ENCODE measurements at regions of chr16 and their contacts with region 1.

Region 1: GRCh38 chr16:54929090-54930004 is 1.3 kb upstream of the IRX5 start:
- DNase-seq: peak; percentile 99
- H3K4me3 ChIP-seq: peak overlapping the region; percentile 87
- H3K27ac ChIP-seq: peak overlapping the region; percentile 96
- H3K4me1 ChIP-seq: peaks cover 21% of the 10 kb centered on the region
- H3K27me3 ChIP-seq: no peaks in the 10 kb centered on the region

Region 2: GRCh38 chr16:53549970-53550690 is 1379.2 kb before region 1 on chr16:
- in situ Hi-C with region 1: loop called (anchors 10 kb)
- DNase-seq: peak; percentile 93
- H3K4me3 ChIP-seq: peak overlapping the region; percentile 42
- H3K27ac ChIP-seq: no peak overlapping the region
- H3K4me1 ChIP-seq: peaks cover 6% of the 10 kb centered on the region
- H3K27me3 ChIP-seq: peaks cover 11% of the 10 kb centered on the region; the same call in 1 of the 2 replicates

Region 3: DNA sequence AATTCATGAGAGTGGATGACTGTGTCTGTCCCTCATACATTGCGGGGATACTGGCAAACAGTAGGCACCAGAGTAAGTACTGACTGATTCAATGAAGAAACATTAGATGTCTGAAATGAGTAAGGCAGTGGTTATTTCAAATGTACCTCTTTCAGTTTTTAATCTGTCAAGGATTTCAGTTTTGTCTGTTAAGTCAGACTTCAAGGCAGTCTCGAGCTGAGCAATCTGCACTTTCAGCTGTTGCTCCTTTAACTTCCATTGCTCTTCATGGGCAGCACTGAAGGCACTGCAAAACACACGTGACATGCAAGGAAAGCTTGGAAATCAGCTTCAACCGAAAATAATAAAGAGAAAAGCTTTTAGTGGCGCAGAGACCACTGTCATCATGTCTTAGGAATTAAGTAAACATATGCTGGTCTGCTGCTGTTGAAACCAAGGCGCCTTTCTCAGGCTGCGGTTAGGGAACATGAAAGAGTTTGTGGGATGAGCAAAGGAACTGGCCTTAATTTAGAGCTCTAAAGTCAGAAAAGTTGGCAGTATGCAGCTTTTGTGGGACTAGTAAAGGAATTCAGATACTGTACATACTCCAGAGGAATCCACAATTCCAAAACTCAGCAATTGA is 1264.5 kb before region 1 on chr16:
- in situ Hi-C with region 1: loop called (anchors 10 kb)
- DNase-seq: peak; percentile 96
- H3K4me3 ChIP-seq: peak overlapping the region; percentile 67
- H3K27ac ChIP-seq: peak overlapping the region; percentile 97
- H3K4me1 ChIP-seq: peaks cover 66% of the 10 kb centered on the region
- H3K27me3 ChIP-seq: no peaks in the 10 kb centered on the region

Region 4: GRCh38 chr16:53773150-53773846 is 1156.0 kb before region 1 on chr16:
- in situ Hi-C with region 1: loop called (anchors 10 kb)
- DNase-seq: peak; percentile 86
- H3K4me3 ChIP-seq: 0 out of 2 replicates have a peak overlapping the region, but pooled peaks have one; percentile 18
- H3K27ac ChIP-seq: peak overlapping the region; percentile 42
- H3K4me1 ChIP-seq: peaks cover 98% of the 10 kb centered on the region
- H3K27me3 ChIP-seq: no peaks in the 10 kb centered on the region

Region 5: DNA sequence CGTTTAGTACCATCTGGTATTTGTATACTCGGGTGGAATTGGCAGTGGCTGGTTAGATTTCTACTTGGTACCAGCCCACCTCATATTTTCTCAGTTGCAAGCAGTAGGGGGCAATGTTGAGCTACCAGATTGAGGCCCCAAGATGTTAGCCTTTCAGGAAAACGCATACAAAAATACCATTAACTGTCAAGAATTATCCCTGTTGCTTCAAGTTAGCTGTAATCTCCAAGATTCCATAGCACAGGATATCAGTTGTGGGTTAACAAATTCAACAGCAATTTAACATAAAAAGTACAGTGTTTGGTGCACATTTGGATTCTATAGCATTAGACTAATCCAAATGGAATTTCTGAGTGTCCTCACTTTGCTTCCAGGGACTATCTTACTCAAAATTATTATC is 1037.2 kb before region 1 on chr16:
- in situ Hi-C with region 1: loop called (anchors 10 kb)
- DNase-seq: peak; percentile 70
- H3K4me3 ChIP-seq: no peak overlapping the region
- H3K27ac ChIP-seq: no peak overlapping the region
- H3K4me1 ChIP-seq: peaks cover 42% of the 10 kb centered on the region
- H3K27me3 ChIP-seq: no peaks in the 10 kb centered on the region

Region 6: DNA sequence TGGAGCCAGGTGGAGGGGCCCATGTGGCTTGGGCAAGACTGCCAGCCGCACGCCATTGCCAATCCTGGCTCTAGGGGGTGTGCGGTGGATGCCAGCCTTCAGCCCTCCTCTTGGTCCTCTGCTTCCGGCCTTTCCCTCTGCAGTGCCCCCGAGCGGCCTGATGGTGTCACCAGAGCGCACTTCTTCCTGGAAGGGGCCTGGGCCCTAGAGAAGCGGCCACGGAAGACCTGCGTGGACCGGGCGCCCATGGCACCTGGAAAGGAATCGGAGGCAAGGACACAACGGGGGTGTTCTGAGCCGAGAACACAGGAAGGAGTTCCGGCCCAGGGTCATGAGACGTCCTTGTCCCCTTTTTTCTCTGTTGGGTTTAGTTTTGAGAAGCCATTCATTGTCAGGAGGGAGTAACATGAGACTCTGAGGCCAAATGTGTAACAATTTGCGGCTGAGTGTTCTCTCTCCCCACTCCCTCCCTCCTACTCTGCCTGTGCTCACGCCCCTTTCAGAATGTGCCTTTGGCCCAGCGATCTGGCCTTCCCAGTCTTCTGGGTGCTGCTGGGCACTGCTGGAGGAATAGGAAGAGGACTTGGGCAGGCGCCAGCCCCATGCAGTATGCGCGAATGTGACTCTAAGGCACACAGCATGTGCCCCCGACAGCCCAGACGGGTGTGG is 735.5 kb before region 1 on chr16:
- in situ Hi-C with region 1: loop called (anchors 10 kb)
- DNase-seq: peak; percentile 88
- H3K4me3 ChIP-seq: peak overlapping the region; percentile 62
- H3K27ac ChIP-seq: peak overlapping the region; percentile 31
- H3K4me1 ChIP-seq: no peaks in the 10 kb centered on the region
- H3K27me3 ChIP-seq: peaks cover 12% of the 10 kb centered on the region; the same call in 1 of the 2 replicates

Measured in GM23248 (cell line).